HEK293T (cell line): ENCODE measurements at regions of chr14 and their contacts with region 1.

Region 1: DNA sequence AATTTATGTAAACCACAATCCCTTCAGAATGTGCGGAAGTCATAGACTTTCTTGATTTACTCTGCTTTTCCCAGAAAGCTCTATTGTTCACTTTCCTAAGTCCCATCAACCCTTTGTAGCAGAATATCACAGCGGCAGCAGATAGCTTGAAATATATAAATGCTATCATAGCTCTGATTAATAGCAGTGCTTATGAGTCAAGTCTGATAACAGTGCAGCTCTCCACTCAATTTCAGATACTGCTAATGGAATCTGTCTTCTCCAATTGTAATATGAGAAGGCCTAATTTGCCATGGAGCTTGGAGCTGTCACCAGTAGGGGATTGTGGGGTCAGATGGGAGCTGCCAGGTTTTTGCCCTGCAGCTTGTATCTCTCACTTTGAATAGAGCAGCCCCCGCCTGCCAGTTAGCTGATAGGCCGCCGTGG is 10.9 kb downstream of the TMEM260 start:
- DNase-seq: peak; percentile 55

Region 2: GRCh38 chr14:56579345-56580220 is 11.0 kb before region 1 on chr14 and contains the start of gene TMEM260:
- CTCF ChIA-PET with region 1: interaction called, 5 read pairs
- POLR2A ChIA-PET with region 1: interaction called, 17 read pairs
- DNase-seq: peak; percentile 87

Region 3: GRCh38 chr14:56608682-56609081 is 18.1 kb after region 1 on chr14:
- CTCF ChIA-PET with region 1: no interaction called
- POLR2A ChIA-PET with region 1: no interaction called
- DNase-seq: no peak

Region 4: DNA sequence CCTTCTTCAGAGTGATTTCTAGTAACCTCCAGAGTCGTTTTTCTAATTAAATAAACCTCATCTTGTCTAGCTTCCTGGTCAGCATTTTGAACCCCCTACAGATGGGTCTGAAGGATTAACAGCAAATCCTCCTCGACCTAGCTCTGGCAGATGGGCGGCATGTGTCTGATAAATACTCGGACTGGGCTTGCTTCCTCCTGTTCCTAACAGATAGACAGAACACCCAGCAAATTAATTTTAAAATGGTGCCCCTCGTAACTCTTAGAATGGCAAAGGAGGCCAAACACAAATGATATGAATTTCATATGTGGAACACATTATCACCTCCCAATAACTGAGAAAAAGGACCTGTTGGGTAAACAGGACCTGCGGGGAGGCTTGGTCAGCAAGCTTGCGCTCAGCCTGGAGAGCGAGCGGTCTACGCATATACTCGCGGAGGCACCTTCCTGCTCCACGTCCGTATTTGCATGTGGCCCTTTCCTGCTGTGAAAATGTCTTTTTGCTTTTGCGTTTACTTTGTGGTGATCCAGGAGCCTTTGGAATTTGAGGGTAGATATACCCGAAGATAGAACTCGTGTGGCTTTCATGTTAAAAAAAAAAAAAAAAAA is 140.1 kb after region 1 on chr14:
- CTCF ChIA-PET with region 1: no interaction called
- POLR2A ChIA-PET with region 1: no interaction called
- DNase-seq: no peak